OCI-LY7 (cell line): ENCODE measurements at regions of chr20 and their contacts with region 1.

Region 1: DNA sequence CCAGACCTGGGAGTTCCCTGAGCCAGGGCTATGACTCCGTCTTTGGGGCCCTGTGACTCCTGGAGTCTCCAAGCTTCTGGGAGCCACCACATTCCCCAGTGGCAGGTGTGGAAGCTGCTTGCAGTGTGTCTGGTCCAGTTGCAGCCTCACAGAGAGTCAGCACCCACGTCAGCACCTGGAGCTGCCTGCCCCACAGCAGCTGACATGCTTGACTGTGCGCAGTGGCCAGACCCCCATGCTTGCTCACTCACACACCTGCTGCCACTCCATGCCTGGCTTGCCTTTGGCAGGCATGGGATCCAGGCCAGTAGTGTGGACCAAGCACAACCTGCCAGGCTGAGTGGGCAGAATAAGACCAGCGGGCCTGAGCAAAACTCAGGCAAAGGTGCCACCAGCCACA is 31.0 kb upstream of the ASIP start:
- DNase-seq: peak; percentile 75
- H3K4me3 ChIP-seq: peak overlapping the region; percentile 18
- H3K27ac ChIP-seq: peak overlapping the region; percentile 77
- H3K4me1 ChIP-seq: peaks cover 24% of the 10 kb centered on the region
- CTCF ChIP-seq: no peak

Region 2: DNA sequence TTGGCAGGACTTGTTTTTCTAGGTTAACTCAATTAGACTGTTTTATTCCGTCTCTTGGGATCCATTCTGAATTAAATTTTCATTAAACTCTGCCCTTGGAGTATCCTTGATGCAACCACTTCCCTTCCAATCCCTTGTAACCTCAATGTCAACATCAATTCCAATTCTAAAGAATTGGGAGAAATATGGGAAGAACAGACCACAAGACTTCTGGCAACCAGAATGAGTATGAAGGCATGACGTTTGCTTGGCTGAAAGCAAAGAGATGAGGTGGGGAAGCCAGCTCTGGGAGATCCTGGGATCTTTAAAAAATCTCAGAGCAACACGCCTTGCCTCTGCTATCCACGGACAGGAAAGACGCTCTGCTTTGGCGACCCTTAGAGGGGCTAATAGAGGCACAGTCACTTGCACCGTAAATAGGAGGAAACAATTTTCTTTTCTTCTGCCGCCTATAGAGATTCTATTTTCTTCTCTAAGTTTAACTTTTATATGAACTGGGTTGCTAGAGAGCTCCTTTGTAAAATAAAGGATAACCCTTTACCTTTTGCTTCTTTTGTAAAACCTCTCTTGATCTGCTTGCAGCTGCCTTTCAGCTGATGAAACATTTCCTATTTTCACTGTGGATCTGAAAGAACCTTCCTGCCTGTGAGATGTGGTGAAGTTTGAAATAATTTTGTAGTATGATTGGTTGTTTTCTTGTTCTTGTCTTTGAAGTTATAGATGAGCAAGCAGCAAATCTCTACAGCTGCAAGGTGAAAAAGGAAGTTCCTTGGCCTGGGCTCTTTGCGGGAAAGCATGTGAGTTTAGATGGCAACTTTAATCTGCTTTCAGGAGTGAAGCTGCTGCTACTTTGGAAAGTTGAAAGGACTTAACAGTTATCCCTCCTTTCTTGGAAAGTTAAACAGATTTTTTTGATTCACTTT is 30.7 kb after region 1 on chr20 and contains the start of gene ASIP:
- CTCF ChIA-PET with region 1: no interaction called
- POLR2A ChIA-PET with region 1: interaction called, 3 read pairs
- intact Hi-C with region 1: loop called (anchors 1 kb)
- DNase-seq: peak; percentile 86
- H3K4me3 ChIP-seq: peak within 1 kb of the TSS; percentile 56
- H3K27ac ChIP-seq: peak within 1 kb of the TSS; percentile 90
- H3K4me1 ChIP-seq: peaks cover 38% of the 10 kb centered on the region
- CTCF ChIP-seq: no peak
- total RNA-seq, gene ASIP: 0.32 TPM in 1 of 2 replicates, not detected in the other

Region 3: DNA sequence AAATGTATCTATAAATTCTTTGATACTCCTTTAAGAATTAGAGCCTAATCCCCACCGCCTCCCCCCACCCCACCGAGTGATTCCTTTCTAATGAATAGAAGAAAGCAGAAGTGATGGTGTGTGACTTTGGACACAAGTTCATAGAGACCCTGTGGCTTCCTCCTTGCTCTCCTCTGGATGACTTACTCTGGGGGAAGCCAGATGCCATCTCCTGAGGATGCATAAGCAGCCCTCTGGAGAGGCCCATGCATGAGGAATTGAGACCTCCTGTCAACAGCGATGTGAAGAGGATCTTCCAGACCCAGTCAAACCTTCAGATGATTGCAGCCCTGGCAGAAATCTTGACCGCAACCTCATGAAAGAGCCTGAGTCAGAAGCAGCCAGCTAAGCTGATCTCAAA is 71.8 kb after region 1 on chr20:
- CTCF ChIA-PET with region 1: no interaction called
- POLR2A ChIA-PET with region 1: no interaction called
- intact Hi-C with region 1: no loop called
- DNase-seq: no peak
- H3K4me3 ChIP-seq: no peak overlapping the region
- H3K27ac ChIP-seq: no peak overlapping the region
- H3K4me1 ChIP-seq: no peaks in the 10 kb centered on the region
- CTCF ChIP-seq: no peak